Naive thymus-derived CD4-positive, alpha-beta T cell (primary cell): ENCODE measurements at regions of chr22 and their contacts with region 1.

Region 1: DNA sequence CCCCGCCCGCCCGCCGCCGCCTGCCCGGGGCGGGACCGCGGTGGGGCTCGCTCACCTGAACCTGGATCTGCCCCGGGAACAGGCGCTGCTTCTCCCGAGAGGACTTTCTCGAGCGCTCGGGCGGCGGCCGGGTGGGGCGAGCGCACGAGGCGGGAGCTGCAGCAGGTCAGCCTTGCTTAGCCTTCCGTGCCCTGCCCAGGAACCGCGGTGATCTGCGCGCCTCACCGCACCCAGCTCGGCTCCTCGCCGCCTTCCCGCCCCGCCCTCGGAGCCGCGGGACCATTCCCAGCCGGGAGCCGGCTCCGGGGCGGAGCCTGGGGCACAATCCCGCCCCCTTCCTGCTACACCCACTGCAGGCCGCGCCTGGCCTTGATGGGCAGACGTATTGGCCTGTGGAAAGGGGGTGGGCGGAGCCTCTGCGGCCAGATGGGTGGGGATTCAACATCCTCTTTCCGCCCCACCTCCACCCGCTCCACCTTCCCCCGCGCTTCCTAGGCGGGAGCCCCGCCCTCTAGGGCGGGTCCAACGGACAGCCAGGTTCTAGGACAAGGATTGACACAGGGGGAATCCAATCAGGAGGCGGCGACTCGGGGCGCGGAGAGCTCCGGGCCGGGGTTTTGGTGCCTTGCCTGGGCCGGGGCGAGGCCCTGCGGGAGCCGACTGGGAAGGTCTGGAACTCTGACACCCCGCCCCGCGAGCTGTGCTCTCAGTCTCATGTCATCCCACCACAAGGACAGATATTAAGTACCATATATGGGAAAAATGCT is at the start of gene MYH9:
- DNase-seq: peak; percentile 93 to 99 (median 99)
- ATAC-seq: peak; percentile 93
- H3K4me3 ChIP-seq: peak within 1 kb of the TSS; percentile 97
- H3K4me3 Mint-ChIP-seq: peak within 1 kb of the TSS; percentile 87 to 99 (median 93)
- H3K27ac ChIP-seq: peak within 1 kb of the TSS; percentile 86
- H3K27ac Mint-ChIP-seq: peak within 1 kb of the TSS; percentile 93 to 97 (median 94)
- H3K4me1 ChIP-seq: peaks cover 20 to 21% of the 10 kb centered on the region in 2 donors
- H3K4me1 Mint-ChIP-seq: peaks cover 18 to 48% (median 35%) of the 10 kb centered on the region in 7 donors
- H3K27me3 ChIP-seq: no peaks in the 10 kb centered on the region
- H3K27me3 Mint-ChIP-seq: no peaks in the 10 kb centered on the region
- total RNA-seq, gene MYH9: 650 to 900 (median 803) TPM

Region 2: GRCh38 chr22:36301384-36301828 is 86.5 kb before region 1 on chr22:
- CTCF ChIA-PET with region 1: interaction called, 4 read pairs
- POLR2A ChIA-PET with region 1: interaction called, 4 read pairs
- intact Hi-C with region 1: loop called in 1 of 2 experiments (anchors 1 kb)
- DNase-seq: peak; percentile 68 to 86 (median 80)
- ATAC-seq: peak; percentile 94
- H3K4me3 ChIP-seq: no peak overlapping the region
- H3K4me3 Mint-ChIP-seq: peak overlapping the region in 3 of 10 donors; percentile 6 to 40 (median 26)
- H3K27ac ChIP-seq: peak overlapping the region; percentile 15
- H3K27ac Mint-ChIP-seq: peak overlapping the region; percentile 56 to 81 (median 76)
- H3K4me1 ChIP-seq: peaks cover 0 to 3% of the 10 kb centered on the region in 2 donors
- H3K4me1 Mint-ChIP-seq: peaks cover 4 to 14% (median 11%) of the 10 kb centered on the region in 7 donors
- H3K27me3 ChIP-seq: no peaks in the 10 kb centered on the region
- H3K27me3 Mint-ChIP-seq: no peaks in the 10 kb centered on the region

Region 3: GRCh38 chr22:36356708-36357694 is 30.9 kb before region 1 on chr22:
- CTCF ChIA-PET with region 1: interaction called, 5 read pairs
- POLR2A ChIA-PET with region 1: interaction called, 1,512 read pairs
- intact Hi-C with region 1: loop called (anchors 1 kb)
- DNase-seq: peak in 3 of 9 donors; percentile 44 to 64 (median 55)
- ATAC-seq: peak; percentile 52
- H3K4me3 ChIP-seq: peak overlapping the region; percentile 39
- H3K4me3 Mint-ChIP-seq: peak overlapping the region; percentile 75 to 89 (median 83)
- H3K27ac ChIP-seq: peak overlapping the region; percentile 57
- H3K27ac Mint-ChIP-seq: peak overlapping the region; percentile 82 to 98 (median 94)
- H3K4me1 ChIP-seq: peaks cover 94 to 96% of the 10 kb centered on the region in 2 donors
- H3K4me1 Mint-ChIP-seq: peaks cover 69 to 100% (median 94%) of the 10 kb centered on the region in 7 donors
- H3K27me3 ChIP-seq: no peaks in the 10 kb centered on the region
- H3K27me3 Mint-ChIP-seq: no peaks in the 10 kb centered on the region

Region 4: GRCh38 chr22:36409911-36410756 is 22.2 kb after region 1 on chr22:
- CTCF ChIA-PET with region 1: interaction called, 3 read pairs
- POLR2A ChIA-PET with region 1: interaction called, 17 read pairs
- intact Hi-C with region 1: loop called in 1 of 2 experiments (anchors 1 kb)
- DNase-seq: peak; percentile 46 to 77 (median 70)
- ATAC-seq: peak; percentile 89
- H3K4me3 ChIP-seq: peak overlapping the region; percentile 28
- H3K4me3 Mint-ChIP-seq: peak overlapping the region; percentile 59 to 82 (median 74)
- H3K27ac ChIP-seq: peak overlapping the region; percentile 70
- H3K27ac Mint-ChIP-seq: peak overlapping the region; percentile 69 to 92 (median 87)
- H3K4me1 ChIP-seq: peaks cover 31 to 40% of the 10 kb centered on the region in 2 donors
- H3K4me1 Mint-ChIP-seq: peaks cover 26 to 63% (median 55%) of the 10 kb centered on the region in 7 donors
- H3K27me3 ChIP-seq: no peaks in the 10 kb centered on the region
- H3K27me3 Mint-ChIP-seq: no peaks in the 10 kb centered on the region

Region 5: GRCh38 chr22:36470162-36470993 is 82.4 kb after region 1 on chr22:
- CTCF ChIA-PET with region 1: interaction called, 5 read pairs
- POLR2A ChIA-PET with region 1: interaction called, 12 read pairs
- intact Hi-C with region 1: loop called in 1 of 2 experiments (anchors 1 kb)
- DNase-seq: peak; percentile 58 to 90 (median 87)
- ATAC-seq: peak; percentile 97
- H3K4me3 ChIP-seq: no peak overlapping the region
- H3K4me3 Mint-ChIP-seq: peak overlapping the region in 2 of 10 donors; percentile 18 to 30
- H3K27ac ChIP-seq: peak overlapping the region; percentile 34
- H3K27ac Mint-ChIP-seq: peak overlapping the region in 7 of 9 donors; percentile 57 to 87 (median 69)
- H3K4me1 ChIP-seq: peaks cover 6 to 18% of the 10 kb centered on the region in 2 donors
- H3K4me1 Mint-ChIP-seq: peaks cover 9 to 32% (median 25%) of the 10 kb centered on the region in 7 donors
- H3K27me3 ChIP-seq: no peaks in the 10 kb centered on the region
- H3K27me3 Mint-ChIP-seq: no peaks in the 10 kb centered on the region

Region 6: GRCh38 chr22:36619797-36620399 is 232.0 kb after region 1 on chr22:
- CTCF ChIA-PET with region 1: no interaction called
- POLR2A ChIA-PET with region 1: no interaction called
- intact Hi-C with region 1: no loop called
- DNase-seq: no peak
- ATAC-seq: no peak
- H3K4me3 ChIP-seq: no peak overlapping the region
- H3K4me3 Mint-ChIP-seq: no peak overlapping the region
- H3K27ac ChIP-seq: no peak overlapping the region
- H3K27ac Mint-ChIP-seq: no peak overlapping the region
- H3K4me1 ChIP-seq: no peaks in the 10 kb centered on the region
- H3K4me1 Mint-ChIP-seq: no peaks in the 10 kb centered on the region
- H3K27me3 ChIP-seq: peaks cover 0 to 12% of the 10 kb centered on the region in 2 donors
- H3K27me3 Mint-ChIP-seq: peaks cover 17 to 57% (median 34%) of the 10 kb centered on the region in 5 donors

Region 7: GRCh38 chr22:36884349-36885117 is 496.6 kb after region 1 on chr22:
- CTCF ChIA-PET with region 1: no interaction called
- POLR2A ChIA-PET with region 1: no interaction called
- intact Hi-C with region 1: no loop called
- DNase-seq: no peak
- ATAC-seq: peak; percentile 49
- H3K4me3 ChIP-seq: no peak overlapping the region
- H3K4me3 Mint-ChIP-seq: no peak overlapping the region
- H3K27ac ChIP-seq: no peak overlapping the region
- H3K27ac Mint-ChIP-seq: no peak overlapping the region
- H3K4me1 ChIP-seq: no peaks in the 10 kb centered on the region
- H3K4me1 Mint-ChIP-seq: peaks cover 0 to 13% (median 7%) of the 10 kb centered on the region in 7 donors
- H3K27me3 ChIP-seq: peaks cover 0 to 3% of the 10 kb centered on the region in 2 donors
- H3K27me3 Mint-ChIP-seq: peaks cover 0 to 30% (median 13%) of the 10 kb centered on the region in 5 donors

Region 8: DNA sequence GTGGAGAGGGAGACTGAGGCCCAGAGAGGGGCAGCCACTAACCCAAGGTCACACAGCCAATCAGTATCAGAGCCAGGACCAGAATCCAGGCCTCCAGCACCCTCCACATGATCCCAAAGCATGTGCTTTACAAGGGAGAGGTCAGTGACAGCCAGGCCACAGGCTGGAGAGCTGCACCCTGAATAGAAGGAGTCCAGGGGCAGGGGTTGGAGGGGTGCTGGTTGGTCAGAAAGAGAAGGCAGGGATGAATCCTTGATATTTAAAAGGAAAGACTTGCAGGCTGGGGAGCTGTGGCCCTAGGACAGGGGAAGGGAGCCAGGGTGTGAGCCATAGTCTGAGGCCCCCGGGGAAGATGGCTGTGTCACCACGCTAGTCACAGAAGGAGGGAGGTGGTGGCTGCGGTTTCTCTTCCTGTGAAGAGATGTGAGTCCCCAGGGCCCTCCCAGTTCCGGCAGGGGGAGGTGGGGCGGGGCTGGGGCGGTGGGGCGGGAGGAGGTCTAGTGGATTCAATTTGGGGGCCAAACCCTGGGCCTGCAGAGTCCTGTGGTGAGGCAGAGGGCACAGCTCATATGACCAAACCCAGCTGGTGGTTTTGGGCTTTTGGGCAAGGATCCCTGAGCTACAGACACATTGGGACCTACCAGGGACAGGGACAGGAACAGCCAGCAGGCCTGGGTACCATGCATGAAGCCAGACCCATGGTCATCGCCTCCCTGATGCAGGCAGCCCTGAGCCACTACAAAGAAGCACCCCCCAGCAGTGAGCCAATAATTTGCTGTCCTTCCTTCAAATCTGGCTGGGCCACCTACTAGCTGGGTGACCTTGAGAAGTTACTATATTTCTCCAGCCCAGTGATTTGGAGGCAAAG is 842.1 kb after region 1 on chr22:
- CTCF ChIA-PET with region 1: no interaction called
- POLR2A ChIA-PET with region 1: no interaction called
- intact Hi-C with region 1: loop called in 1 of 2 experiments (anchors 10 kb)
- DNase-seq: peak; percentile 60 to 93 (median 89)
- ATAC-seq: peak; percentile 93
- H3K4me3 ChIP-seq: peak overlapping the region; percentile 54
- H3K4me3 Mint-ChIP-seq: peak overlapping the region; percentile 75 to 99 (median 86)
- H3K27ac ChIP-seq: peak overlapping the region; percentile 90
- H3K27ac Mint-ChIP-seq: peak overlapping the region; percentile 96 to 100 (median 99)
- H3K4me1 ChIP-seq: peaks cover 80 to 92% of the 10 kb centered on the region in 2 donors
- H3K4me1 Mint-ChIP-seq: peaks cover 75 to 92% (median 87%) of the 10 kb centered on the region in 7 donors
- H3K27me3 ChIP-seq: no peaks in the 10 kb centered on the region
- H3K27me3 Mint-ChIP-seq: no peaks in the 10 kb centered on the region